ENCODE measurements at regions of chr10 and their contacts with region 1.

Region 1: DNA sequence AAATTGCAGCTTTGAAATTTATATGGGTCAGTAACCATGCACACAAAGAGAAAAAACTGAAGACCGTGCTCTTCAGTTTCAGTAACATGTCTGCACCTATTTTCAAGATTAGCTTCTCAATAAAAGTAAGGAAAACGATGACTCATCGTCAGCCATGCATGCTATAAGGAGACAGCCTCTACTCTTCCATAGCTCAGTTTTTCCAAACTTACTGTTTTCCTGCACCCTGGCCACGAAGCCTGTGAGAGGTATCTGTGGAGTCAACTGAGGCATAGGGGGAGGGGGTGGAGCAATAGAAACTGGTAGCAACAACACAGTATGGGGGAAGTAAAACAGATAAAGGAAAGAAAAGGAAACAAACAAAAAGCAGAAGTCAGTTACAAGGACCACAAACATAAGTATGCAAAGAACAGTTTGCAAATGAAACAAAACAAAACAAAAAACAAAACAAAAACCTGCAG is 58.0 kb downstream of the PDSS1 start:
- DNase-seq: peak; percentile 67
- ATAC-seq: peak; percentile 98
- H3K4me3 ChIP-seq: peak overlapping the region; percentile 55; the same call in 1 of the 2 replicates
- H3K27ac ChIP-seq: peak overlapping the region; percentile 49
- H3K4me1 ChIP-seq: peaks cover 9% of the 10 kb centered on the region; the same call in 1 of the 2 replicates
- H3K27me3 ChIP-seq: no peaks in the 10 kb centered on the region
- CTCF ChIP-seq: no peak
- EP300 ChIP-seq: peak in 1 of 2 experiments; percentile 22; a peak in 1 of 4 replicates
- POLR2A ChIP-seq: no peak
- RAD21 ChIP-seq: no peak

Region 2: GRCh38 chr10:26737730-26738129 is 17.7 kb before region 1 on chr10:
- CTCF ChIA-PET with region 1: interaction called, 6 read pairs
- POLR2A ChIA-PET with region 1: interaction called, 15 read pairs
- RAD21 ChIA-PET with region 1: interaction called, 6 read pairs
- SMC1A ChIA-PET with region 1: interaction called, 16 read pairs
- in situ Hi-C with region 1: no loop called
- intact Hi-C with region 1: no loop called
- DNase-seq: peak; percentile 95
- ATAC-seq: peak; percentile 90
- H3K4me3 ChIP-seq: no peak overlapping the region
- H3K27ac ChIP-seq: peak overlapping the region; percentile 92
- H3K4me1 ChIP-seq: peaks cover 62% of the 10 kb centered on the region
- H3K27me3 ChIP-seq: no peaks in the 10 kb centered on the region
- CTCF ChIP-seq: no peak
- EP300 ChIP-seq: peak; percentile 11 to 85; a peak in 3 of 4 replicates
- POLR2A ChIP-seq: peak; percentile 76
- RAD21 ChIP-seq: peak; percentile 24; the same call in 1 of the 2 replicates

Region 3: GRCh38 chr10:26743091-26743490 is 12.4 kb before region 1 on chr10:
- CTCF ChIA-PET with region 1: interaction called, 6 read pairs
- POLR2A ChIA-PET with region 1: interaction called, 15 read pairs
- RAD21 ChIA-PET with region 1: interaction called, 6 read pairs
- SMC1A ChIA-PET with region 1: interaction called, 16 read pairs
- in situ Hi-C with region 1: no loop called
- intact Hi-C with region 1: no loop called
- DNase-seq: no peak
- ATAC-seq: no peak
- H3K4me3 ChIP-seq: no peak overlapping the region
- H3K27ac ChIP-seq: peak overlapping the region; percentile 61
- H3K4me1 ChIP-seq: peaks cover 52% of the 10 kb centered on the region
- H3K27me3 ChIP-seq: no peaks in the 10 kb centered on the region
- CTCF ChIP-seq: no peak
- EP300 ChIP-seq: no peak
- POLR2A ChIP-seq: no peak
- RAD21 ChIP-seq: no peak